B cell (primary cell): ENCODE measurements at regions of chr16 and their contacts with region 1.

Region 1: DNA sequence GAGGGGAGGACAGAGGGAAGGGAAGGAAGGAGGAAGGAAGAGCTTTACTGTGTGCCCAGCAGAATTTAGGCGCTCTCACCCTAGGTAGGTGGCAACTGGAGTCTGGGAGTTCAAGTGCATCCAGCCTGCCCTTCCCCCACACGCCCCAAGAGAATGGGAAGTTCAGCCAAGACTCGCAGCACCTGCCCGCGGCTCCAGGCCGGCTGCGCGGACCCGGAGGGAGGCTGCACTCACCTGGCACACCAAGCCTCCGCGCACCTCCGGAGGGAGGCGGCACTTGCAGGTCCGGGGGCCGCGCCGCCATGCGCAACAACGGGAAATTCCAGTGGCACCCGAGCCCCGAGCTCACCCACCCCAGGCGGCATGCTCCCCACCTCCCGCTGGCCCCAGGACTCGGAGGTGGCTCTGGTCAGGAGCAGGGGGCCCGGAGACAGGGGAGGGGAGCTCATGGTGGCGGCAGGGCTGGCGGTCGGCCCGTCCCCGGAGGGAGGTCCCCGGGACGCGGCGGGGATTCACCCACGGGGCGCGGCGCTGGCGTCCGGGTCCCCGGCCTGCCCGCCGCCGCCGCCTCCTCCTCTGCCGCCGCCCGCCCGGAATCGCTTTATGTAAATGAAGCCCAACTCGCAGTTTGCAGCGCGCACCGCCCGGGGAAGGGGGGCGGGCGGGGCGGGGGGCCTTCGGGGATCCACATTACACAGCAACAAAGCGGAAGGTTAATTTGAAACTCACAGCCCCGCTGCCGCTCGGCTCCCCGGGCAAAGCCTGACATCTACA is at the start of gene ZFHX3:
- DNase-seq: peak; percentile 87
- ATAC-seq: peak; percentile 86
- H3K4me3 ChIP-seq: peak within 1 kb of the TSS; percentile 34 to 71 (median 62)
- H3K4me3 Mint-ChIP-seq: peak within 1 kb of the TSS; percentile 80
- H3K27ac ChIP-seq: peak within 1 kb of the TSS in 1 of 2 donors; percentile 59
- H3K27ac Mint-ChIP-seq: peak within 1 kb of the TSS; percentile 64
- H3K4me1 ChIP-seq: peaks cover 9 to 16% of the 10 kb centered on the region in 2 donors
- H3K4me1 Mint-ChIP-seq: peaks cover 21% of the 10 kb centered on the region
- H3K27me3 ChIP-seq: peaks cover 0 to 6% (median under 1%) of the 10 kb centered on the region in 4 experiments
- H3K27me3 Mint-ChIP-seq: peaks cover 8% of the 10 kb centered on the region
- CTCF ChIP-seq: peak; percentile 4
- total RNA-seq, gene ZFHX3: 6.4 and 6.6 TPM in 2 replicates

Region 2: GRCh38 chr16:74296432-74297144 is 1248.9 kb after region 1 on chr16 and contains the start of gene PSMD7:
- CTCF ChIA-PET with region 1: no interaction called
- POLR2A ChIA-PET with region 1: no interaction called
- intact Hi-C with region 1: loop called (anchors 10 kb)
- DNase-seq: peak; percentile 94
- ATAC-seq: peak; percentile 90
- H3K4me3 ChIP-seq: peak within 1 kb of the TSS; percentile 74 to 94 (median 93)
- H3K4me3 Mint-ChIP-seq: peak within 1 kb of the TSS; percentile 95
- H3K27ac ChIP-seq: peak within 1 kb of the TSS; percentile 87 to 96
- H3K27ac Mint-ChIP-seq: peak within 1 kb of the TSS; percentile 96
- H3K4me1 ChIP-seq: peaks cover 22 to 26% of the 10 kb centered on the region in 2 donors
- H3K4me1 Mint-ChIP-seq: peaks cover 24% of the 10 kb centered on the region
- H3K27me3 ChIP-seq: no peaks in the 10 kb centered on the region
- H3K27me3 Mint-ChIP-seq: no peaks in the 10 kb centered on the region
- CTCF ChIP-seq: no peak
- total RNA-seq, gene PSMD7: 59.9 and 60.8 TPM in 2 replicates